Activated CD8-positive, alpha-beta memory T cell treated with anti-CD3 and anti-CD28 coated beads, Interleukin-2, amount 10 ng/mL, durations not matched to agents 7 days and 5 days (primary cell): ENCODE measurements at regions of chr1 and their contacts with region 1.

Region 1: DNA sequence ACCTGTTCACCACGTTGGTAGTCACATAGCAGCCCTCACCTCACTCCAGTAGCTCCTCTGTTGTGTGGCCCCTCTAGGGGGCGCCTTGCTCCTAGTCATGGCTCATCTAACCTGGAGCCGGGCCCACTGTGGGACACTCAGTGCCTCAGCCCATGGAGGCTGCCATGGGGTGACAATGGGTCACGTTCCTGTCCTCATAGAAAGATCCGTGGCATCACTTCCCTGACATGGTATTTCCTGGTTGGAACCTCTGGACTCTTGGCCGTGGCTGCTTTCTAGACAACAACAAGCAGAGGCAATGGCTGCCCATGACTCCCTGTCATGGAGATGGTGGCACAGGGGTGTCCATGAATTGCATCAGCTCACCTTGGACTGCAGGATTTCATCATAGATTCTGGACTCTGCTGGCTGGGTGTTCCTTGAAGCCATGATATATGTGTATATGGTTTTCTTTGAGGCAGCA is 27.5 kb upstream of the SLAMF6 start:
- DNase-seq: peak; percentile 71
- ATAC-seq: peak; percentile 80
- H3K4me3 Mint-ChIP-seq: no peak overlapping the region
- H3K27ac Mint-ChIP-seq: peak overlapping the region; percentile 9
- H3K4me1 Mint-ChIP-seq: no peaks in the 10 kb centered on the region
- H3K27me3 Mint-ChIP-seq: no peaks in the 10 kb centered on the region

Region 2: GRCh38 chr1:160575112-160575664 is 24.6 kb after region 1 on chr1:
- CTCF ChIA-PET with region 1: interaction called, 120 read pairs
- DNase-seq: no peak
- ATAC-seq: peak; percentile 14
- H3K4me3 Mint-ChIP-seq: peak overlapping the region; percentile 57
- H3K27ac Mint-ChIP-seq: peak overlapping the region; percentile 97
- H3K4me1 Mint-ChIP-seq: peaks cover 74% of the 10 kb centered on the region
- H3K27me3 Mint-ChIP-seq: no peaks in the 10 kb centered on the region